Activated CD8-positive, alpha-beta T cell treated with anti-CD3 and anti-CD28 coated beads, Interleukin-2, amount 10 ng/mL, durations not matched to agents 7 days and 5 days (primary cell): ENCODE measurements at regions of chr16 and their contacts with region 1.

Region 1: DNA sequence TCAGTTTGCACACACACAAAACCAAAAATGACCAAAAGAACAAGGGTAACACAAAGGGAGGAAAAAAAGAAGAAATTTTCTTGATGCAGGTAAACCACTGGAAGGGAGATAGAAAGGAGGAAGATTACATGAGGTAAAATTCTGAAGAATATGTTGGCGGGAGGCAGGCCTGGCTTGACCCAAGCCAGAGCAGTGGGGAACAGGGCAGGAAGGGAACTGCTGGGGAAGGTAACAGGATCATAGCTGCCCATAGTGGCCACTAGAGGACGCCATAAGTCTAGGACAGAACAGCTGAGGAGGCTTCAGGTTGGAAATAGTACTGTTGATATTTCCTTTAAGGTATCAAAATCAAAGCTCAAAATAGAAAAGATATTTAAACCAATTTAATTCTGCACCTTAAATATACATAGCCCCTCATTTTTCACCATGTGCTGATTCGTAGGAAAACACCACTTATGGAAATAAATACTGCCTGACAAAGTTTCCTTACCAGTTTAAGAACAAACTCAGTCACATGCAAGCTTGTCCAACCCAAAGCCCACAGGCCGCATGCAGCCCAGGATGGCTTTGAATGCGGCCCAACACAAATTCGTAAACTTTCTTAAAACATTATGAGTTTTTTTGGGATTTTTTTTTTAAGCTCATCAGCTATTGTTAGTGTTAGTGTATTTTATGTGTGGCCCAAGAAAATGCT is 15.5 kb downstream of the VPS35 start:
- DNase-seq: peak; percentile 64
- ATAC-seq: peak; percentile 96
- H3K4me3 Mint-ChIP-seq: no peak overlapping the region
- H3K27ac Mint-ChIP-seq: no peak overlapping the region
- H3K4me1 Mint-ChIP-seq: no peaks in the 10 kb centered on the region
- H3K27me3 Mint-ChIP-seq: no peaks in the 10 kb centered on the region

Region 2: DNA sequence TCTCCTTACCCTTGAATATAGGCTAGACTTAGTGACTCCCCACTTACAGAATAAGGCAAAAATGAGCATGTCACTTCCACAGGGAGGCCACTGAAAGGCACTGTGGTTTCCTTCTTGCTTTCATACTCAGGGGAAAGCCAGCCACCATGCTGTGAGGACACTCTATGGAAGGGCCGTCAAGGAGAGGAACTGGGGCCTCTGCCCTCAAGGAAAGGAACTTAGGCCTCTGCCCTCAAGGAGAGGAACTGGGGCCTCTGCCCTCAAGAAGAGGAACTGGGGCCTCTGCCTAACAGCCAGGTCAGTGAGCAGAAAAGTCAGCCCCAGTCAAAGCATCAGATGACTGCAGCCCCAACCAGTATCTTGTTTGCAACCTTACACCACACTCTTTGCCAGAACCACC is 14.5 kb before region 1 on chr16:
- CTCF ChIA-PET with region 1: interaction called, 20 read pairs
- POLR2A ChIA-PET with region 1: interaction called, 5 read pairs
- DNase-seq: peak; percentile 28
- ATAC-seq: peak; percentile 71
- H3K4me3 Mint-ChIP-seq: no peak overlapping the region
- H3K27ac Mint-ChIP-seq: peak overlapping the region; percentile 64
- H3K4me1 Mint-ChIP-seq: peaks cover 15% of the 10 kb centered on the region
- H3K27me3 Mint-ChIP-seq: no peaks in the 10 kb centered on the region

Region 3: GRCh38 chr16:46689365-46690280 is 16.2 kb after region 1 on chr16 and contains the start of gene ORC6:
- CTCF ChIA-PET with region 1: interaction called, 23 read pairs
- POLR2A ChIA-PET with region 1: interaction called, 7 read pairs
- DNase-seq: peak; percentile 98
- ATAC-seq: peak; percentile 85
- H3K4me3 Mint-ChIP-seq: no peak within 1 kb of the TSS
- H3K27ac Mint-ChIP-seq: no peak within 1 kb of the TSS
- H3K4me1 Mint-ChIP-seq: peaks cover 26% of the 10 kb centered on the region
- H3K27me3 Mint-ChIP-seq: no peaks in the 10 kb centered on the region
- total RNA-seq, gene ORC6: 44.4 to 48.1 TPM

Region 4: GRCh38 chr16:46715769-46716305 is 42.4 kb after region 1 on chr16:
- CTCF ChIA-PET with region 1: no interaction called
- POLR2A ChIA-PET with region 1: no interaction called
- DNase-seq: no peak
- ATAC-seq: no peak
- H3K4me3 Mint-ChIP-seq: no peak overlapping the region
- H3K27ac Mint-ChIP-seq: no peak overlapping the region
- H3K4me1 Mint-ChIP-seq: no peaks in the 10 kb centered on the region
- H3K27me3 Mint-ChIP-seq: no peaks in the 10 kb centered on the region

Region 5: GRCh38 chr16:46807336-46807735 is 133.9 kb after region 1 on chr16:
- CTCF ChIA-PET with region 1: interaction called, 10 read pairs
- POLR2A ChIA-PET with region 1: no interaction called
- DNase-seq: no peak
- ATAC-seq: no peak
- H3K4me3 Mint-ChIP-seq: no peak overlapping the region
- H3K27ac Mint-ChIP-seq: no peak overlapping the region
- H3K4me1 Mint-ChIP-seq: peaks cover 10% of the 10 kb centered on the region
- H3K27me3 Mint-ChIP-seq: no peaks in the 10 kb centered on the region

Region 6: GRCh38 chr16:46908540-46909372 is 235.3 kb after region 1 on chr16:
- CTCF ChIA-PET with region 1: interaction called, 21 read pairs
- POLR2A ChIA-PET with region 1: no interaction called
- DNase-seq: peak; percentile 68
- ATAC-seq: peak; percentile 49
- H3K4me3 Mint-ChIP-seq: no peak overlapping the region
- H3K27ac Mint-ChIP-seq: no peak overlapping the region
- H3K4me1 Mint-ChIP-seq: peaks cover 13% of the 10 kb centered on the region
- H3K27me3 Mint-ChIP-seq: no peaks in the 10 kb centered on the region

Region 7: DNA sequence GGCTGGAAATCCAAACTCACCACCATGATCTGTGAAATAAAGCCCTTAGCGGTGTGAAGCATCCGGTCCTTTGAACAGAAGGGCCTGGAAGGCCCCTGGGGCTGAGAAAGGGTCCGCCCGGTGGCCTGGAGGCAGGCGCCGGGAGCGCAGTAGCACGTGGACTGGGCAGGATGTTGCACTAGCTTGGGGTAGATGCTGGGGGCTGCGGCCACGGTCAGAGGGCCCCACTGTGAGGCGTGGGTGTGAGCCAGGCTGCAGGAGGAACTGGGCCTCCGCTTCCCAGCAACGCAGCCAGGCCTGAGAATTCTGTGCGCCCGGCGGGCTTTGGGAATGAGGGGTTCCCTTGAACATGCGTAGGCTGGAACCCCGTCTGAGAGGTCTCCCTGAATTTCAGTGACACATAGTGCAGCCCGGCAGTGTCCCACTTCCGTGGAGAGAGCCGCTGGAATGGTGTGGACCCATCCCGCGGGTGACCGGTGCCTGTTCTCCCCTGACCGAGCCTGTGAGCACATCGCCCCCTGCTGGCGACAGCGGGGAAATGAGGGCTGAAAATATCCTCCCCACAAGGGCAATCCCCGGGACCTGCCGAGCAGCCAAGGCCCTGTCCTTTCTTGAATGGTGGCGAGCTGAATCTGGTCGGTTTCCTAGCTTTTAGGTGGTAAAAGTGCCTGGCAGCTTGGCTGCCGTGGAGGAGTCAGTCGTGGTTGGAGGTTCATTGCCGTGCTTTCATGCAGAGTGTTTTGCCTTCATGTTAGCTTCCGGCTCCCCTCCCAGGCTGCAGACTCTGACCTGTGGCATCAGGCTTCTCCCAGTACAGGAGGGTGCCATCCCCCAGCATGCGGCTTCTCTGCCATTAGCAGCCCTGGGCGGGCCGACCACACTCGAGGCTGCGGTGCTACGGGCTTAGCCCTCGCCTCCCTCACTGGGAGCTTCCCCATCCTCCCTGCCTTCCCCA is 256.2 kb after region 1 on chr16:
- CTCF ChIA-PET with region 1: interaction called, 15 read pairs
- POLR2A ChIA-PET with region 1: no interaction called
- DNase-seq: peak; percentile 72
- ATAC-seq: peak; percentile 78
- H3K4me3 Mint-ChIP-seq: no peak overlapping the region
- H3K27ac Mint-ChIP-seq: no peak overlapping the region
- H3K4me1 Mint-ChIP-seq: peaks cover 5% of the 10 kb centered on the region
- H3K27me3 Mint-ChIP-seq: no peaks in the 10 kb centered on the region